Endothelial cell of umbilical vein (primary cell): ENCODE measurements at regions of chr5 and their contacts with region 1.

Region 1: GRCh38 chr5:177497292-177498033 is at the start of gene PDLIM7:
- DNase-seq: peak; percentile 98
- H3K4me3 ChIP-seq: peak within 1 kb of the TSS; percentile 47 to 79 (median 74)
- H3K27ac ChIP-seq: peak within 1 kb of the TSS; percentile 93
- H3K4me1 ChIP-seq: peaks cover 42% of the 10 kb centered on the region
- H3K27me3 ChIP-seq: no peaks in the 10 kb centered on the region
- CTCF ChIP-seq: no peak
- POLR2A ChIP-seq: peak; percentile 99
- total RNA-seq, gene PDLIM7: 318 and 371 TPM in 2 replicates

Region 2: GRCh38 chr5:176822793-176823481 is 674.5 kb before region 1 on chr5:
- CTCF ChIA-PET with region 1: no interaction called
- POLR2A ChIA-PET with region 1: no interaction called
- dilution Hi-C with region 1: no loop called
- intact Hi-C with region 1: no loop called
- DNase-seq: no peak
- H3K4me3 ChIP-seq: no peak overlapping the region
- H3K27ac ChIP-seq: no peak overlapping the region
- H3K4me1 ChIP-seq: no peaks in the 10 kb centered on the region
- H3K27me3 ChIP-seq: peaks cover 8 to 12% of the 10 kb centered on the region in 2 experiments
- CTCF ChIP-seq: no peak
- POLR2A ChIP-seq: no peak

Region 3: GRCh38 chr5:177311723-177312648 is 185.5 kb before region 1 on chr5 and contains the start of gene MXD3:
- CTCF ChIA-PET with region 1: interaction called, 6 read pairs
- POLR2A ChIA-PET with region 1: no interaction called
- dilution Hi-C with region 1: no loop called
- intact Hi-C with region 1: loop called (anchors 1 kb)
- DNase-seq: peak; percentile 92
- H3K4me3 ChIP-seq: peak within 1 kb of the TSS; percentile 49 to 64 (median 58)
- H3K27ac ChIP-seq: peak within 1 kb of the TSS; percentile 78
- H3K4me1 ChIP-seq: peaks cover 22% of the 10 kb centered on the region
- H3K27me3 ChIP-seq: no peaks in the 10 kb centered on the region
- CTCF ChIP-seq: no peak
- POLR2A ChIP-seq: peak; percentile 63
- total RNA-seq, gene MXD3: 30.5 and 44.2 TPM in 2 replicates

Region 4: DNA sequence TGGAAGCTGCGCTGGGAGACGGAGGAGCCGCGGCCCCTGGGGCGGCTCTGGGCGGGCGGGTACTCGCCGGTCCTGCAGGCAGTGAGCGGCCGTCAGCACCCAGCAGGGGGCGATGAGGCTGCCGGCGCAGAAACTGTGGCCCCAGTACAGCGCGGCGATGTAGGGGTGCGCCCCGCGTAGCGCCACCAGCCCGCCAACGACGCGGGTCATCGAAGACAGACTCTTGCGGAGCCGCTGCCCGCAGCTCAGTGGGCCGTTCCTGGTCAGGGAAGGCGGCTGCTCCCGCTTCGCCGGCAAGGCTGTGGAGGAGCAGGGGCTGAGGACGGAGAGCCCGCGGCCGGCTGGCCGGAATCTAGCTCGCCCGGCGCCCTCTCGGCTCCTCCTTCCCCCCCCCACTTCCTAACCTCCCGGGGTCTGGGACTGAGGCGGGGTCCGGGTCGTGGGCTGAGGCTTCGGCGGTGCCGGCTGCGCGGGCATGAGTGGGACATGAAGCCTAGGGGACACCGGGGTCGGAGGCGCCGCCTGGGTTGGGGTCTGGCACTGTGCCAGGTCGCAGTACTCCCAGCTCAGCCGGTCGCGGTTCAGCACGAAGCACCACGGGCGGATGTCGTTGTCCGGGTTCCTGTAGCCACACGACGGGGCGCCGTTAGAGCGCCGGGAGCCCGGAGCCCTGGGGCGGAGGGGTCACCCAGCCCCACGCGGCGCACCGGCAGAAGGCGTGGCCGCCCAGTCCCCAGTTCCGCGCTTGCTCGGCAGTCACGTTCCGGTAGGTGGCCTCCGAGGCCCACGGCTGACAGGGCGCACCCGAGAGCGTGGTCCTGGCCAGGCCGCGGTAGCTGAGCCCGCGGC is 93.4 kb before region 1 on chr5:
- CTCF ChIA-PET with region 1: interaction called, 49 read pairs
- POLR2A ChIA-PET with region 1: interaction called, 7 read pairs
- dilution Hi-C with region 1: no loop called
- intact Hi-C with region 1: loop called (anchors 1 kb)
- DNase-seq: peak; percentile 73
- H3K4me3 ChIP-seq: peak overlapping the region; percentile 27 to 42 (median 34)
- H3K27ac ChIP-seq: no peak overlapping the region
- H3K4me1 ChIP-seq: peaks cover 23% of the 10 kb centered on the region
- H3K27me3 ChIP-seq: peaks cover 34 to 39% of the 10 kb centered on the region in 2 experiments
- CTCF ChIP-seq: peak; percentile 81 to 87
- POLR2A ChIP-seq: peak; percentile 41

Region 5: DNA sequence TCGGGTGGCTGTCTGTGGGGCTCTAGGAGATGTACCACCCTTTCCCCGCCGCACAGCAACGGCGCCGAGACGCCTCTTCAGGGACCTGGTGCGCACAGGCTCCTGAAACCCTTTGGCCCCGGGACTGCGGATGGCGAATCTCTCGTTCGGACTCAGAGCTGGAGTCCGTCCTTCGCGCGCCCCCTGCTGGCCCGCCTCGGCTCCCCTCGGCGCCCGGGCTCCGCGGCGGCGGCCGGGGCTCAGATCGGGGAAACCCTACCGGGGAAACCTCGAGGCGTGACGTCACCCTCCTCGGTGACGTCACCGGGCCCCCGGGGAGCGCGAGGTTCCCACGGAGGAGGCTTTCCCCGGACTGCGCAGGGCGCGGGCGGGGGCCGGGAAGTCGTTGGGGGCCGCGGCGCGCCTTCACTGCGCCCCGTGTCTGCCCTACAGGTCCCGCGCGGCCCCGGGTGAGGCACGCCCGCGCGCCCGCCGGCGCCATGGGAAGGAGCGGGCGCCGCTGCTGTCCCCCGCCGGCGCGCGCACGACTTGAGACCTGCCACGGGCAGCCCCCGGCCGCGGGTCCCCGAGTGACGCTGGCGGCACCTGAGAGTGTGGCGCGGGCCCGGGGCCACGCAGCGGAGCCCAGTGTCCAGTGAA is 42.9 kb before region 1 on chr5:
- CTCF ChIA-PET with region 1: interaction called, 25 read pairs
- POLR2A ChIA-PET with region 1: interaction called, 6 read pairs
- dilution Hi-C with region 1: no loop called
- intact Hi-C with region 1: loop called (anchors 1 kb)
- DNase-seq: peak; percentile 92
- H3K4me3 ChIP-seq: peak overlapping the region; percentile 6 to 38 (median 21)
- H3K27ac ChIP-seq: peak overlapping the region; percentile 77
- H3K4me1 ChIP-seq: peaks cover 28% of the 10 kb centered on the region
- H3K27me3 ChIP-seq: no peaks in the 10 kb centered on the region
- CTCF ChIP-seq: peak; percentile 83 to 99
- POLR2A ChIP-seq: peak; percentile 59

Region 6: GRCh38 chr5:177478711-177479646 is 18.5 kb before region 1 on chr5:
- CTCF ChIA-PET with region 1: interaction called, 16 read pairs
- POLR2A ChIA-PET with region 1: interaction called, 17 read pairs
- dilution Hi-C with region 1: no loop called
- intact Hi-C with region 1: no loop called
- DNase-seq: no peak
- H3K4me3 ChIP-seq: no peak overlapping the region
- H3K27ac ChIP-seq: no peak overlapping the region
- H3K4me1 ChIP-seq: no peaks in the 10 kb centered on the region
- H3K27me3 ChIP-seq: no peaks in the 10 kb centered on the region
- CTCF ChIP-seq: no peak
- POLR2A ChIP-seq: peak; percentile 52

Region 7: DNA sequence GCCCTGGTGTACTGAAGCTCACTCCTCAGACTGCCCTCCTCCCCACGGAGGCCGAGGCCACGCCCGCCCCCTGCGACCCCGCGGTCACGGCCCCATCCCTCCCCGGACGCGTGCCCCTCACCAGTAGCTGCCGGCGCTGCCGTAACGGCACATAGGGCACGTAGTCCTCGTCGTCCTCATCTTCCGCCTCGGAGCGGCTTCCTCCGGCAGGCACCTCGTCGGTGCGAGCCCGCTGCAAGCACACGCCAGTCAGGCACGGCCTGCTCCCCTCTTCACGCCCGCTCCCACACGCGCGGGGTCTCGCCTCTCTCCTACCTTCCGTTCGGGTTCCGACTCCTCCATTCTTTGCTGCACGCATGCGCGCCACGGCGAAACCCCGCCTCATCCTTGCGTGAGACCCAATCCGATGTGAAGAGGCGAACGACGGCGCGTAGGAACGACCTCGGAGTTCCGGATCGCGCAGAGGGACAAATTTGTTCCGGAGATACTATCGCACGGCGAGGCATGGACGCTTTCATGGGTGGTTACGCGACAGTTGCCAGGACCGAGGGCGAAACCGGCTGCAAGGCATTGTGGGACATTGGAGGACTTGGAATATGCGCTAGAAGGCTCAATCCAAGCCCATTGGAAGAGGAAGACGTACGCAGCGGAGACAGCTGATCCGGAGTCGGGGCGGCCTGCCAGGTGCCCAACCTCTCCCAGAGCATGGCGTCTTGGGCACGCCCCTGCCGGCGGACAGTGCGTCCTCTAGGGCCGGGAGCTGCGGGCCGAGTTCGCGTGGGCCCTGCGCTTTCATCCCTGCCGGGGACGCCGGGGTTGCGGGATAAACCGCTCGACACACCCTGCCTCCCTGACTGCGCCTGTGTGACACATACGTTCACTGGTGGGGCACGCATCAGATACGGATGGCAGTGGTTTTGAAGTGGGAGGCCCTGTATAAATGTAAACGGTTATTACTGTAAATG is 19.4 kb after region 1 on chr5 and contains the start of gene DDX41:
- CTCF ChIA-PET with region 1: interaction called, 22 read pairs
- POLR2A ChIA-PET with region 1: interaction called, 5 read pairs
- dilution Hi-C with region 1: no loop called
- intact Hi-C with region 1: loop called (anchors 1 kb)
- DNase-seq: peak; percentile 100
- H3K4me3 ChIP-seq: peak within 1 kb of the TSS; percentile 26 to 98 (median 51)
- H3K27ac ChIP-seq: peak within 1 kb of the TSS; percentile 18
- H3K4me1 ChIP-seq: peaks cover 8% of the 10 kb centered on the region
- H3K27me3 ChIP-seq: no peaks in the 10 kb centered on the region
- CTCF ChIP-seq: peak in 1 of 2 donors; percentile 5
- POLR2A ChIP-seq: no peak
- total RNA-seq, gene DDX41: 86.4 and 103 TPM in 2 replicates

Region 8: DNA sequence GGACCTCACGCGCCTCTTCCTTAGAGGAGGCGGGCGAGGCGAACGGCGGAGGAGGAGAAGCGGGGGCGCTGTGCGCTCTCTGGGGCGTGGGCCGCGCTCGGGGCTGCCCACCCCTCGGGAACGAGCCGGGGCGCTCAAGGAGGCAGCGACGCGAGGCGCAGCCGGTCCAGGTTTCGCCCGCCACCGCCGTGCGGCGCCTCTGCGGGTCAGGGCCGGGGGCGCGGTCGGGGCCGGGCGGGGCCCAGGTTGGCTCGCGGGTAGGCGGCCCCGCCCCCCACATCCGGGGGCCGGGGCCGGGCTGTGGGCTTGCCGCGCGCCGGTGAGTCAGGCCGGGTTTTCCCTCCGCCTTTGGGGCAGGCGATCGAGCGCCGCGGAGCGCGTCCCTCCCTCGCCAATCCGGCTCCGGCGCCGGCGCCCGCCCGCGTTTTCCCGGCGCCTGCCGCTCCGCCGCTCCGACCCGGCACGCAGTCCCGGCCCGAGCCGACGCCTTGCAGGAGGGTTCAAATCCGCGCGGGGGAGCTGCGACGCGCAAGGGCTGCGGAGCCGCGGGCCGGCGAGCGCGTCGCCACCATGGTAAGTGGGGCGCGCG is 615.8 kb after region 1 on chr5 and contains the start of gene N4BP3:
- CTCF ChIA-PET with region 1: no interaction called
- POLR2A ChIA-PET with region 1: no interaction called
- dilution Hi-C with region 1: no loop called
- intact Hi-C with region 1: loop called (anchors 10 kb)
- DNase-seq: peak; percentile 56
- H3K4me3 ChIP-seq: peak within 1 kb of the TSS; percentile 20 to 94 (median 69)
- H3K27ac ChIP-seq: no peak within 1 kb of the TSS
- H3K4me1 ChIP-seq: peaks cover 37% of the 10 kb centered on the region
- H3K27me3 ChIP-seq: no peaks in the 10 kb centered on the region
- CTCF ChIP-seq: peak; percentile 3 to 7
- POLR2A ChIP-seq: no peak
- total RNA-seq, gene N4BP3: 38.2 and 40.3 TPM in 2 replicates